ENCODE measurements at regions of chr7 and their contacts with region 1.

Region 1: DNA sequence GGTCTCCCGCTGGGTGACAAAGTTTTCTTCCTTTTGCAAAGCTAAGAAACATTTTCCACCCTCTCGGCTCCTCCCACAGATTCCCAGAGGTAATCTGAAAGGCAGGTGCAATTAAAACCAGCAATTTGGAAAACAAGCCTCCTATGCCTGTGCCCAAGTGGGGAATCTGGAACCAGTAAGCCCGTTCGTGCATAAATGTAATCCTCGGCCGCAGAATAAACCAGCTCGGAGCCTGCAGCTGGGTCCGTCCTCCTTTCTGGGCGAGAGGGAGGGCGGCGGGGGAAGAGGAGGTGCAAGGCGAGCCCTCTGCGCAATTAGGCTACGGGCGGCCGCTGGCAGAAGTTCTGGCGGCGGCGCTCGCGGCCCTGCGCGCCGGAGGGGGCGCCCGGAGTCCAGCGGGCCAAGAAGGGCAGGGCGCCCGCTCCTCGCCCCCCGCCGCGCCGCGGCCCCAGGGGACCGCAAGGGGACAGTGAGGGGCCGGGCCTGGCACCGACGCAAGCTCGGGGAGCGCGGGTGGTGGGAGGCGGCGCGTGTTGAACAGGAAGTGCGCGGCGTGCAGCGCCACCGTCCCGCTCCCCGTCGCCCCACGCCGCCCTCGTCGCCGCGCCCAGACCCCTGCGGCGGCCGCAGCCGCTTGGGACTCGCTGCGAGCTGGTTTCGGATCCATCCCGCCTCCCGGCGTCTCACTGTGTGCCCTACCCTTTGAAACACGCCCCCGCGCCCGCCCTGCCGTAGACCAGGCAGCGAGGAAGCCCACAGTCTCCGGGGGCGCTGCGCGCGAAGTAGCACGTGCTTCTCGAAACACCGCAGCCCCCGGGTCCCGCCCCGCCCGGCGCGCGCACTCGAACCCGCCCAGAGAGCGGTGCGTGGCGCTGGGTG is at the start of gene PRKAG2:
- DNase-seq: peak; percentile 89
- H3K4me3 ChIP-seq: peak within 1 kb of the TSS; percentile 77 to 82 (median 80)
- H3K27ac ChIP-seq: peak within 1 kb of the TSS; percentile 88 to 93 (median 90)
- H3K4me1 ChIP-seq: peaks cover 0 to 22% (median 14%) of the 10 kb centered on the region in 4 donors
- H3K27me3 ChIP-seq: peaks cover 0 to 4% (median 0%) of the 10 kb centered on the region in 3 donors
- CTCF ChIP-seq: no peak
- EP300 ChIP-seq: no peak
- POLR2A ChIP-seq: no peak
- total RNA-seq, gene PRKAG2: 37.1 to 51.2 (median 40.1) TPM

Region 2: GRCh38 chr7:151782598-151783448 is 94.3 kb before region 1 on chr7:
- intact Hi-C with region 1: loop called (anchors 2 kb)
- DNase-seq: peak; percentile 87
- H3K4me3 ChIP-seq: peak overlapping the region in 3 of 4 donors; percentile 13 to 36 (median 25)
- H3K27ac ChIP-seq: peak overlapping the region in 1 of 4 donors; percentile 29
- H3K4me1 ChIP-seq: peaks cover 0 to 19% (median 12%) of the 10 kb centered on the region in 4 donors
- H3K27me3 ChIP-seq: no peaks in the 10 kb centered on the region
- CTCF ChIP-seq: peak; percentile 73 to 90 (median 84)
- EP300 ChIP-seq: no peak
- POLR2A ChIP-seq: no peak

Region 3: GRCh38 chr7:151925446-151926335 is 48.6 kb after region 1 on chr7:
- intact Hi-C with region 1: loop called (anchors 5 kb)
- DNase-seq: peak; percentile 81
- H3K4me3 ChIP-seq: peak overlapping the region in 3 of 4 donors; percentile 2 to 26 (median 23)
- H3K27ac ChIP-seq: peak overlapping the region; percentile 42 to 77 (median 62)
- H3K4me1 ChIP-seq: peaks cover 0 to 16% (median 10%) of the 10 kb centered on the region in 4 donors
- H3K27me3 ChIP-seq: no peaks in the 10 kb centered on the region
- CTCF ChIP-seq: no peak
- EP300 ChIP-seq: no peak
- POLR2A ChIP-seq: no peak

Region 4: DNA sequence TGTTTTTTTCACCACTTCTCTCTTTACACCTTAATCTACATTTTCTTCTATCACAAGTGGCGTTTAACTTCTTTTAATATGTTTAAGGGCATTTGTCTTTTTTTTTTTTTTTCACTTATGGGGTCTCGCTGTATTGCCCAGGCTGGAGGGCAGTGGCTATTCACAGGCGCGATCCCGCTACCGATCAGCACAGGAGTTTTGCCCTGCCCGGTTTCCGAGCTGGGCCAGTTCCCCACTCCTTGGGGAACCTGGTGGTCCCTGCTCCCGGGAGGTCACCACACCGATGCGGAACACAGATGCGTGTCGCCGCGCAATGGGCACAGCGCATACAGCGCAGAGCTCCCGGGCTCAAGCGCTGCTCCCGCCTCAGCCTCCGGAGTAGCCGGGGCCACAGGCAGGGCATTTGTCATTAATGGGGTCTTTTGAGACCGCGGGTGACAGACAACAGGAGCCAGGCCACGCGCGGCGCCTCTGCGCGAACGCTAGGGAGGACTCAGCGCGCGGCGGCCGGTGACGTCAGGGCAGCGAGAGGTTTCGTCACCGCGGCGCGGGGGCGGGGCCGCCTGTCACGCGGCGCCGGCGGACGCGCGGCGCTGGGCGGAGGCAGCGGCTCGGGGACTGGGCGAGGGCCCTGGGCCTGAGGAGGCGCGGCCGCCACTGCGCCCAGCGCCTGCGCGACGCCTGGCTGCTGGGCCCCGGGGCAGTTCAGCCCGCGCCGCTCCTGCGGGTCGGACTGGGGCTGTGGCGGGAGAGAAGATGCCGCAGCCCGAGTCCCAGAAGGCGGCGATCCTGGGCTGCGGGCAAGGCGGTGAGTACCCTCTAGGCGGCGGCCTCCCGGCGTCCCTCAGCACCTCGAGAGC is 148.2 kb after region 1 on chr7 and contains the start of gene GALNT11:
- intact Hi-C with region 1: loop called (anchors 10 kb)
- DNase-seq: peak; percentile 93
- H3K4me3 ChIP-seq: peak within 1 kb of the TSS; percentile 63 to 86 (median 82)
- H3K27ac ChIP-seq: peak within 1 kb of the TSS; percentile 89 to 94 (median 92)
- H3K4me1 ChIP-seq: peaks cover 0 to 20% (median 13%) of the 10 kb centered on the region in 4 donors
- H3K27me3 ChIP-seq: no peaks in the 10 kb centered on the region
- CTCF ChIP-seq: peak in 1 of 4 experiments; percentile 28
- EP300 ChIP-seq: no peak
- POLR2A ChIP-seq: peak in 1 of 2 donors; percentile 23
- total RNA-seq, gene GALNT11: 35.7 to 48.2 (median 40.4) TPM

Region 5: DNA sequence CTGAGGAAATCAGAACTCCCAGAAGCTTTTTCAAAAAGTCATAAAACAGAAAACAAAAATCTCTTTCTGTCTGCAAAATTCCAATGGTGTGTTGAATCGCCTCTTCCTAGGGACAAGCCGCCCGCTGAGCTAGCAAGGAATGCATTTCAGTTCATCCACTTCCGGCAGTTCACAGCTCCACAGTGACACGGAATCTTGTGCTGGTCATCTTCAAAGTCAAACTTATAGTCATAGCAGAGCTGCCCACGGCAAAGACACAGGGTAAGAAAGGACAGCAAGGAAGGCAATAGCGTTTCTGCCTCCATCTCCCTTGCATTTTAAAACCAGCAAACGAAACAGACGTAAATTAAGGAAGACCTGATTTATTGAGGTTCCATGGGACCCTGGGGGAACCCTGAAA is 259.5 kb after region 1 on chr7:
- intact Hi-C with region 1: loop called (anchors 10 kb)
- DNase-seq: no peak
- H3K4me3 ChIP-seq: peak overlapping the region in 2 of 4 donors; percentile 5 to 18
- H3K27ac ChIP-seq: peak overlapping the region in 3 of 4 donors; percentile 65 to 70 (median 66)
- H3K4me1 ChIP-seq: peaks cover 0 to 24% (median 18%) of the 10 kb centered on the region in 4 donors
- H3K27me3 ChIP-seq: no peaks in the 10 kb centered on the region
- CTCF ChIP-seq: no peak
- EP300 ChIP-seq: no peak
- POLR2A ChIP-seq: no peak